ENCODE measurements at regions of chr7 and their contacts with region 1.

Region 1: DNA sequence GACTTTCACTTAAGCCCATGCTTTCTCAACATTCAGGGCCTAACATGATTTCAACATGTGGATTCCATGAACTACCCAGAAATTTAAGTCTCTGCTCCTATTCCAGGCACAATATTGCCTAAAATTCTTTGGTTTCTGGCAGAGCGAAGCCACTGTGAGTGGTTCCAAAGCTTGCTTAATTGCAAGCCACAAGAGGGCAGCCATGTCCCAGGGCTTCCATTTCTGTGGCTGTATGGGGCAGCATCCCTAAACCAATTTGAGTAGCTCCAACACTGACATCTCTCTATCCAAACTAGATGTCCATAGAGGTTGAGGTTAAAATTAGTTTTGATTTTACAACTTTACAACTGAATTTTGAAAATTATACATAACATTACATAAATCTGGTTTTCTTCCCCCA is 56.3 kb upstream of the MDFIC start:
- DNase-seq: peak; percentile 23 to 59
- ATAC-seq: peak in 7 of 8 donors; percentile 70 to 89 (median 79)
- H3K4me3 ChIP-seq: no peak overlapping the region
- H3K27ac ChIP-seq: no peak overlapping the region
- H3K4me1 ChIP-seq: no peaks in the 10 kb centered on the region
- H3K27me3 ChIP-seq: no peaks in the 10 kb centered on the region
- CTCF ChIP-seq: peak; percentile 61 to 90 (median 79)

Region 2: DNA sequence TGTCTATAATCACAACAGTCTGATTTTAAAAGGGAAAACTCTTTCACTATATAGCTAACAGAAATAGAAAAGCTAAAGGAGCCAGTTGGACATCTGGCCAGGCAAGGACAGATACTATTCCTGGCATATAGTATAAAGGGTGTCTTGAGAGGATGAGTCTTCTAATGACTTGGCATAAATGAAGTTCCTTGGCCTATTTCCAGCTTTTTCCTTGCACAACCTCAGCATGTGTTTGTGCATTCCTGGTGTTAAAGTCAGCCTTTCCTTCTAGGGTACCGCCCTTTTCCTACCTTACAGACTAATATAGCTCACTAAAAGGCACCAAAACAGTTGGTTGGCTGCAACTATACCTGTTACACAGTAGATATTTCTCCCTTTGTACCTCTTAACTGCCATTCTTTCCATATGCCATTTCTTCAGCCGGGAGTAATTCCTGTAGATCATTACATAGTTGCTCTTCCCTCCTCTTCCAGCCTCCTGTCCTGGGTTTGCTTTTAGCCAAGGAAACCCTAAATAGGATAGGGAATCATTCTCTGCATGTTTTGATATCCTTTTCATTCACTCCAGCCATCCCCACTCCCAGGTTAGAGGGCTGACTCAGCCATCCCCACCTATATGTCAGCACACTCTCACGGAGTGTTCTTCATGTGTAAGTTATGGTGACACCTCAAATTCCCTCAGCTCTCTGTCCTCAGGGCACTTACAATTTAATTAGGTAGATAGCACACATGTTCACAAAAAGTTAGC is 45.8 kb before region 1 on chr7:
- intact Hi-C with region 1: no loop called
- DNase-seq: no peak
- ATAC-seq: peak in 1 of 8 donors; percentile 66
- H3K4me3 ChIP-seq: no peak overlapping the region
- H3K27ac ChIP-seq: no peak overlapping the region
- H3K4me1 ChIP-seq: peaks cover 0 to 11% (median 4%) of the 10 kb centered on the region in 9 donors
- H3K27me3 ChIP-seq: no peaks in the 10 kb centered on the region
- CTCF ChIP-seq: no peak

Region 3: DNA sequence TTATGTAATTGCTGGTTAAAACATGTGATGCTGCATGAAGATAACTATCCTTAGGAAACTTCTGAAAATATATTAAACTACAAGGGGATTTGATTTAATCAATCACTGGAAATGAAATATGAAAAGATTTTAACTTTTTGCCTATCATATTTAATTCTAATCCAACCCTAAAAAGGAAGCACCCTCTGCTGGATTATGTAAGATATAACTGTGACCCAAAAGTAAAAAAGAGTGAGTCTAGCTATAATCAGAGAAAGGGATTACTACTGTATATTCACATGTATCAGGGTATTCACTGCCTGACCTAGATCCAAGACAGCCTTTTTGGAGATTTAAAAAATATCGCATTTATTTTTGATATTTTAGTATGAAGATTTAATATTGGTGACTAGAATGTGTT is 351.8 kb after region 1 on chr7:
- intact Hi-C with region 1: loop called in 8 of 10 experiments (anchors 1 to 10 kb)
- DNase-seq: no peak
- ATAC-seq: no peak
- H3K4me3 ChIP-seq: no peak overlapping the region
- H3K27ac ChIP-seq: no peak overlapping the region
- H3K4me1 ChIP-seq: peaks cover 0 to 7% (median 4%) of the 10 kb centered on the region in 9 donors
- H3K27me3 ChIP-seq: no peaks in the 10 kb centered on the region
- CTCF ChIP-seq: peak in 8 of 9 donors; percentile 16 to 63 (median 49)

Region 4: GRCh38 chr7:115230882-115231571 is 365.5 kb after region 1 on chr7:
- intact Hi-C with region 1: loop called in 1 of 10 experiments (anchors 10 kb)
- DNase-seq: peak in 1 of 2 donors; percentile 6
- ATAC-seq: peak in 4 of 8 donors; percentile 41 to 90 (median 70)
- H3K4me3 ChIP-seq: no peak overlapping the region
- H3K27ac ChIP-seq: no peak overlapping the region
- H3K4me1 ChIP-seq: peaks cover 0 to 12% (median 0%) of the 10 kb centered on the region in 9 donors
- H3K27me3 ChIP-seq: no peaks in the 10 kb centered on the region
- CTCF ChIP-seq: no peak

Region 5: GRCh38 chr7:115475761-115476385 is 610.3 kb after region 1 on chr7:
- intact Hi-C with region 1: loop called in 8 of 10 experiments (anchors 2 to 10 kb)
- DNase-seq: no peak
- ATAC-seq: peak in 5 of 8 donors; percentile 42 to 85 (median 69)
- H3K4me3 ChIP-seq: peak overlapping the region in 2 of 10 donors; percentile 44 to 48
- H3K27ac ChIP-seq: no peak overlapping the region
- H3K4me1 ChIP-seq: peaks cover 0 to 17% (median 0%) of the 10 kb centered on the region in 9 donors
- H3K27me3 ChIP-seq: peaks cover 0 to 46% (median 28%) of the 10 kb centered on the region in 7 donors
- CTCF ChIP-seq: peak in 7 of 9 donors; percentile 15 to 55 (median 44)

Region 6: GRCh38 chr7:115679976-115680375 is 814.4 kb after region 1 on chr7:
- intact Hi-C with region 1: loop called in 3 of 10 experiments (anchors 10 kb)
- DNase-seq: no peak
- ATAC-seq: no peak
- H3K4me3 ChIP-seq: no peak overlapping the region
- H3K27ac ChIP-seq: no peak overlapping the region
- H3K4me1 ChIP-seq: no peaks in the 10 kb centered on the region
- H3K27me3 ChIP-seq: no peaks in the 10 kb centered on the region
- CTCF ChIP-seq: peak in 8 of 9 donors; percentile 4 to 49 (median 32)

Region 7: DNA sequence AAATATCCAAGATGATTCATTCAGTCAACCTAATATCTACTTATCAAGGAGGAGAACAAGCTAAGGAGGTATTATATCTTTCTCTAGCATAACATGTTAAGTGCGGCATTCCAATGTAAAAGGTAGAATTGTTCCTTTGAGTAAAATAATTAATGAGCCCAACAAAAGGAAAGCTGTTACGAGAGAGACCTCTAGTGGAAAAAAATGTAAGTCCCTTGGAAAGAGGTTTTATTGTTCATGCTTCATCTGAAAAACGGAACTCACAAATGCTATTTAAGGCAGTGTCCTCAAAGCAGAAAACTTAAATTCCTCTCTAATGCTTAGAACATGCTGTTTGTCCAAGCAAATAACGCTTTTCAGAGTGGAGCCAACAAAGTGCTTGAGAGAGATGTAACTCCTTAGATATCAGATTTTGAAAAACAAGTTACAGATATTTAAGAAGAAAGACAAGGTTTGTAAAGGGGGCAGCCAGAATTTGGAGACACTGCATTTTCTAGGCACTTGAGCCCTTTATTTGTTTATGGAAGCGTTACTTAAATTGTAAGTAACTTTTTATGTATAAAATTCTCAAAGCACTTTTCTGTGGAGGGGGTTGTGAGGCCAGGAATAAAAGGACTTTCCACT is 1045.1 kb after region 1 on chr7:
- intact Hi-C with region 1: loop called in 1 of 10 experiments (anchors 5 kb)
- DNase-seq: no peak
- ATAC-seq: no peak
- H3K4me3 ChIP-seq: no peak overlapping the region
- H3K27ac ChIP-seq: no peak overlapping the region
- H3K4me1 ChIP-seq: peaks cover 0 to 9% (median 0%) of the 10 kb centered on the region in 9 donors
- H3K27me3 ChIP-seq: peaks cover 0 to 13% (median 0%) of the 10 kb centered on the region in 7 donors
- CTCF ChIP-seq: peak in 8 of 9 donors; percentile 15 to 68 (median 62)

Measured in heart right ventricle (tissue), 16 donors.